T-cell (primary cell): ENCODE measurements at regions of chr2 and their contacts with region 1.

Region 1: GRCh38 chr2:42385225-42385624 is 24.2 kb upstream of the COX7A2L start:
- DNase-seq: no peak
- ATAC-seq: no peak
- H3K4me3 ChIP-seq: no peak overlapping the region
- H3K4me3 Mint-ChIP-seq: no peak overlapping the region
- H3K27ac ChIP-seq: no peak overlapping the region
- H3K27ac Mint-ChIP-seq: no peak overlapping the region
- H3K4me1 ChIP-seq: no peaks in the 10 kb centered on the region
- H3K4me1 Mint-ChIP-seq: no peaks in the 10 kb centered on the region
- H3K27me3 ChIP-seq: peaks cover 0 to 10% of the 10 kb centered on the region in 2 experiments
- H3K27me3 Mint-ChIP-seq: no peaks in the 10 kb centered on the region

Region 2: DNA sequence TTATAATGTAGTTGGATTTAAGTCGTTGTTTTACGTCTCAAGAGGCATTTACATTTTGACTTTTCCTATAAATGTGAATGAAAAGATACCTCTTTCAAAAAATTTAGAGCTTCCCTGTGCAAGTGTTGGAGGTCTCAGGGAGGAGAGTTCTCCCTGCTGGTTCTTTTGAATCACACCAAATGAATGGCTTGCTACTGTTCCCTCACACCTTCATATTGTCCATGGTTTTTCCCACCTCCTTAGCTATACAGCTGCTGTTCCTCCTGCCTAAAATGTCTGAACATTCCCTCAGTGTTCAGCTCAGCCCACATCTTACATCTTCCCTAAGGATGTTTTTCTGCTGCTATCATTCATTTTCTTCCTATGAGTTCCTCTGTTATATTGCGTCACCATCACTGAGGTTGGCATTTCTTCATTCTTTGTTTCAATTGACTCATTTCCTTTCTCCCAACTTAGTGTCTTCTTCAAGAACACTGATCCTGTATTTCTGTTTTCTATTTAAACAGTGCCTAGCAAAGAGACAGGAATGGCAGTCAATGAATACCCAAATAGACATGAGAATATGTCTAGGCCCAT is 70.2 kb before region 1 on chr2:
- CTCF ChIA-PET with region 1: no interaction called
- POLR2A ChIA-PET with region 1: no interaction called
- DNase-seq: no peak
- ATAC-seq: no peak
- H3K4me3 ChIP-seq: no peak overlapping the region
- H3K4me3 Mint-ChIP-seq: no peak overlapping the region
- H3K27ac ChIP-seq: no peak overlapping the region
- H3K27ac Mint-ChIP-seq: peak overlapping the region; percentile 68 to 72
- H3K4me1 ChIP-seq: no peaks in the 10 kb centered on the region
- H3K4me1 Mint-ChIP-seq: peaks cover 24 to 33% (median 27%) of the 10 kb centered on the region in 3 donors
- H3K27me3 ChIP-seq: no peaks in the 10 kb centered on the region
- H3K27me3 Mint-ChIP-seq: no peaks in the 10 kb centered on the region

Region 3: DNA sequence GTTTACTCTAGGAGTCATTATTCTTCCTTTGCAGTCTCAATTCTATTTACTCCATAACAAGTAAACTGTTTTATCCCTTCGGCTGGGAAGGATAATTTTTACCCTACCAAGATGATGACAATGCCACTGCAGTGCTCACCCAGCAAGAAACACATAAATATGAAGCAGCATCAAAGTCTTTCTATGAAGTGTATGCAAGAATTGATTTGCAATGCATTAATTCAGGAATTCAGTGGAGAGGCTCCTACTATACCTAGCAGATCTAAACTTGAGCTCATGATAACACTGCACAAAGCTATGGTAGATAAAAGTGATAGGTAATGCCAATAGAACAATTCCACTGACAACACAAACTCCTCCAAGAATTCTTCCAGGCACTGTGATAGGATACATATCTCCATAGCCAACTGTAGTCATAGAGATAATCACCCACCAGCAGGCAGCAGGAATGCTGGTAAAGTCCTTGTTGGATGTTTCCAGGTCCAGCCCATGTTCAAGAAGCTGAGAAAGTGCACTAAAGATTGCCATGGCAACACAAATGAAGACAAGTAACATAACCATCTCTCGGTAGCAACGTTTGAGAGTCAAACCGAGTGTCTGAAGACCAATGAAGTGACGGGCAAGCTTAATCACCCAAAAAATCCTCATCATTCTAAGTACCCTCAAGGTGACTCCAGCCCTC is 58.6 kb after region 1 on chr2:
- CTCF ChIA-PET with region 1: interaction called in 1 of 2 experiments, 10 read pairs
- POLR2A ChIA-PET with region 1: no interaction called
- DNase-seq: no peak
- ATAC-seq: no peak
- H3K4me3 ChIP-seq: no peak overlapping the region
- H3K4me3 Mint-ChIP-seq: no peak overlapping the region
- H3K27ac ChIP-seq: no peak overlapping the region
- H3K27ac Mint-ChIP-seq: no peak overlapping the region
- H3K4me1 ChIP-seq: no peaks in the 10 kb centered on the region
- H3K4me1 Mint-ChIP-seq: no peaks in the 10 kb centered on the region
- H3K27me3 ChIP-seq: no peaks in the 10 kb centered on the region
- H3K27me3 Mint-ChIP-seq: peaks cover 0 to 2% of the 10 kb centered on the region in 2 donors

Region 4: GRCh38 chr2:42874949-42875801 is 489.9 kb after region 1 on chr2:
- CTCF ChIA-PET with region 1: no interaction called
- POLR2A ChIA-PET with region 1: no interaction called
- DNase-seq: no peak
- ATAC-seq: no peak
- H3K4me3 ChIP-seq: no peak overlapping the region
- H3K4me3 Mint-ChIP-seq: no peak overlapping the region
- H3K27ac ChIP-seq: no peak overlapping the region
- H3K27ac Mint-ChIP-seq: no peak overlapping the region
- H3K4me1 ChIP-seq: peaks cover 7 to 14% of the 10 kb centered on the region in 2 experiments
- H3K4me1 Mint-ChIP-seq: peaks cover 16 to 20% (median 18%) of the 10 kb centered on the region in 3 donors
- H3K27me3 ChIP-seq: no peaks in the 10 kb centered on the region
- H3K27me3 Mint-ChIP-seq: no peaks in the 10 kb centered on the region